ENCODE measurements at regions of chr5 and their contacts with region 1.

Region 1: DNA sequence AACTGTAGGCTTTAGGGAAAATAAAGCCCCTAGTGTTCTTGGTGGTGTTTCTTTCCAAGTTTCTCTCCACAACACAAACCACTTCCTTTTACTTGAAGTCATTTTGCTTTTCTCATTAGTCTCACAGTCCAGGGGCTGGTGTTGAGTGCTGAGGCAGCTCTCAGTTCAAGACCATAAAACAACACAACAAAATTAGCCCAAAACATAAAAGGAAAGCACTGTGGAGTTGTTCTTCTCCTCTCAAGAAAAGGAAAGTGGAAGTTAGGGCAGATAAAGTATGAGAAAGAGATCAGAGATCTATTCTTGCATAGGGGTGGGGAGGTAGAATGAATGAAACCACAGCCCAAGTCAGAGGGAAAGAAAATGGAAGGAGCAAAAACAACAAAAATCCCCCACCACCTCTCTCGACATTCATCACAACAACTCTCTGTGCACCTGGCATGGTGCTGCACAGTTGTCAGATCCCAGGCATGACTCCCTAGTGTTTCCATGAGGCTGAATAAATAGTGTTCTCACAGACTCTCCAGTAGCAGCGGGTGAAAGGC is 569.9 kb downstream of the RAB3C start:
- DNase-seq: no peak
- H3K4me3 ChIP-seq: no peak overlapping the region
- H3K27ac ChIP-seq: no peak overlapping the region
- H3K4me1 ChIP-seq: no peaks in the 10 kb centered on the region
- H3K27me3 ChIP-seq: no peaks in the 10 kb centered on the region
- CTCF ChIP-seq: no peak
- POLR2A ChIP-seq: no peak

Region 2: DNA sequence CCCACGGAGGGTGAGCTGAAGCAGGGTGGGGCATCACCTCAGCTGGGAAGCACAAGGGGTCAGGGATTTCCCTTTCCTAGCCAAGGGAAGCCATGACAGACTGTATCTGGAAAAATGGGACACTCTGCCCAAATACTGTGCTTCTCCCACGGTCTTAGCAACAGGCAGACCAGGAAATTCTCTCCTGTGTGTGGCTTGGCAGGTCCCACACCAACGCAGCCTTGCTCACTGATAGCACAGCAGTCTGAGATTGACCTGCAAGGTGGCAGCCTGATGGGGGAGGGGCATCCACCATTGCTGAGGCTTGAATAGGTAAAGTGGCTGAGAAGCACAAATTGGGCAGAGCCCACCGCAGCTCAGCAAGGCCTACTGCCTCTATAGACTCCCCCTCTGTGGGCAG is 546.7 kb before region 1 on chr5:
- intact Hi-C with region 1: no loop called
- DNase-seq: no peak
- H3K4me3 ChIP-seq: no peak overlapping the region
- H3K27ac ChIP-seq: no peak overlapping the region
- H3K4me1 ChIP-seq: no peaks in the 10 kb centered on the region
- H3K27me3 ChIP-seq: no peaks in the 10 kb centered on the region
- CTCF ChIP-seq: no peak
- POLR2A ChIP-seq: no peak

Region 3: GRCh38 chr5:59025734-59026133 is 127.0 kb before region 1 on chr5:
- intact Hi-C with region 1: no loop called
- DNase-seq: no peak
- H3K4me3 ChIP-seq: no peak overlapping the region
- H3K27ac ChIP-seq: no peak overlapping the region
- H3K4me1 ChIP-seq: no peaks in the 10 kb centered on the region
- H3K27me3 ChIP-seq: no peaks in the 10 kb centered on the region
- CTCF ChIP-seq: no peak
- POLR2A ChIP-seq: no peak

Region 4: DNA sequence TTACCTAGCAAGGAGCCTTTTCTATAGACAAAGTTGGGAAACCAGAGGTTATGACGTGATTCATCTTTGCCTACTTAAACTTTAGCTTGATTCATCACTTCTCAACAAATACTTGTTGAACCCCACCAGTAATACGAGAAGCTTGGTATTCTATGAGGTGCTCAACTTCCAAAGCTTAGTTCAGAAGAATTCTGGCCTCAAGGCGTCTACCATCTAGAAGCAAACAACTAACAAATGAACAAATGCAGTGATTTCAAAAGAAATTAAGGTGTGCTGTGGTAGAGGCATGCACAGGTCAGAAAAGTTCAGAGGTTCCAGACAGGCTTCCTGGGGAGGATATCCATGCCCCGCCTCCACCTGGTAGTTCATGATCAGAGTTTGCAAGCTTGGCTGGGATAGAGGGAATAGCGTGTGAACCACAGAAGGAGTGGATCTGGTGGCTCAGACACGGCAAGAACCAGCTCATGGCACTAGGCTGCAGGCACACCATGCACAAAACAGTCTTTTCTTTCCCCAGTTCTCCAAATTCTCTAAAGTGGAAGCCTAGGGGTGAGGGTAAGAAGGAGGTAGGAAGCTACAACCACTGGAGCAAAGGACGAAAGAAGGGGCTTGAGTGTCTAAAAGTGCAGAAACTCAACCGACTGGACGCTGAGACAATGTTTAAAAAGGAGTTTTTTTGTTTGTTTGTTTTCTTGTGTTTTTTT is 96.9 kb before region 1 on chr5:
- intact Hi-C with region 1: loop called in 1 of 2 experiments (anchors 10 kb)
- DNase-seq: no peak
- H3K4me3 ChIP-seq: no peak overlapping the region
- H3K27ac ChIP-seq: no peak overlapping the region
- H3K4me1 ChIP-seq: no peaks in the 10 kb centered on the region
- H3K27me3 ChIP-seq: no peaks in the 10 kb centered on the region
- CTCF ChIP-seq: no peak
- POLR2A ChIP-seq: no peak

Region 5: GRCh38 chr5:59218424-59219045 is 65.8 kb after region 1 on chr5:
- intact Hi-C with region 1: no loop called
- DNase-seq: no peak
- H3K4me3 ChIP-seq: no peak overlapping the region
- H3K27ac ChIP-seq: no peak overlapping the region
- H3K4me1 ChIP-seq: no peaks in the 10 kb centered on the region
- H3K27me3 ChIP-seq: no peaks in the 10 kb centered on the region
- CTCF ChIP-seq: peak in 5 of 6 experiments; percentile 22 to 50 (median 40)
- POLR2A ChIP-seq: no peak